ENCODE measurements at regions of chr21 and their contacts with region 1.

Region 1: DNA sequence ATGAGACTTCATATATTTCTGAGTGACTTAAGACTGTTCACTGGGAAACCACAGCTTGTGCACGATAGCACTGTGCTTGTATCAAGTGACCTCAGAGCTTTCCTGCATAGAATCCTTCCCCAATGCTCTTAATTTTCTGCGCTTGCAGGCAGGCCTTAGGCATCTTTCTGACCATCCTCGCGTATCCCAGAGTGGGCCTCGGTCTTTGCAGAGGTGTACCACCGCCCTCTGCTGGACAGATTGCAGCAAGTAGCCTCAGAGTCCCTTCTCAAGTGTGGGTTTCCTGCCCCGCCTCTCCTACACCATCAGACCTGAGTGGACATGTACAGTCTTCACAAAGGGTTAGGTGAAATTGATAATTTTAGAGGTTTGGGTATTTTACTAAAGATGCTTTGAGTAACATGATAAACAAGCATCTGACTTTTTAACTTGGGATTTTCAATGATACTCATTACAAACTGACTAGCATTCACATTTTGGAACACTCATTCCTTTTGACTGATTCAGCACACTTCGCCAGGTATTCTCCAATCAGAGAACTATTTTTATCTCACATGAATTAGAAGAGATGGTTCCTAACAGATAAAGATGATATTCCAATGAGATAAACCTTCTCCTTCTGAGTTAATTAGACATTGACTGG is 246.5 kb upstream of the USP25 start:
- H3K4me3 Mint-ChIP-seq: no peak overlapping the region
- H3K27ac Mint-ChIP-seq: no peak overlapping the region
- H3K4me1 Mint-ChIP-seq: no peaks in the 10 kb centered on the region
- H3K27me3 Mint-ChIP-seq: no peaks in the 10 kb centered on the region

Region 2: GRCh38 chr21:14403681-14404318 is 1079.5 kb before region 1 on chr21:
- intact Hi-C with region 1: loop called (anchors 10 kb)
- H3K4me3 Mint-ChIP-seq: no peak overlapping the region
- H3K27ac Mint-ChIP-seq: no peak overlapping the region
- H3K4me1 Mint-ChIP-seq: no peaks in the 10 kb centered on the region
- H3K27me3 Mint-ChIP-seq: no peaks in the 10 kb centered on the region

Region 3: DNA sequence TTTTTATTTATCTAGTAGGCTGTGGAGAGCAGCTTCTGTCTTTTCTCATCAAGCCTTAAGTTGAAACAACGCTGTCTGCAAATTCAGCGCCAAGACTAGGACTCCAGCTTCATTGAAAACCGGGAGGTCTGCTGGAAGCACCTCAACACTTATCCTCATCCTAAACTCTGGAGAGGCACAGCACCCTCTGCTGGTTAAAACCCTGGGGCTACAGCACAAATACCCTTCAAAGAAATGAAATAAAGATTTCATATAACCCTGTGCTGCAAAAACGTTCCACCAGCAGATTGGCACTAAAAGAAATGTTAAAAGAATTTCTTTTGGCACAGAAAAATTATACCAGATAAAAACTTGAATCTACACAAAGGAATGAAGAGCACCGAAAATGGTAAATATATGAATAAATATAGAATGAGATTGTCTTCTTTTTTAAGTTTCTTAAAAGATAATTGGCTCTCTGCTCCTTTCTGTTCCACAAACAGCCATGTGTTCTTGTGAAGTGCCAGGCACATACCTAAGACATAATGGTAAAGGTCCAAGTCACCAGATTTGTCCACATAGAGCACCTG is 709.4 kb before region 1 on chr21:
- intact Hi-C with region 1: loop called (anchors 10 kb)
- H3K4me3 Mint-ChIP-seq: no peak overlapping the region
- H3K27ac Mint-ChIP-seq: no peak overlapping the region
- H3K4me1 Mint-ChIP-seq: peaks cover 9% of the 10 kb centered on the region
- H3K27me3 Mint-ChIP-seq: no peaks in the 10 kb centered on the region

Region 4: GRCh38 chr21:14864211-14865021 is 618.8 kb before region 1 on chr21:
- intact Hi-C with region 1: loop called (anchors 1 kb)
- H3K4me3 Mint-ChIP-seq: no peak overlapping the region
- H3K27ac Mint-ChIP-seq: peak overlapping the region; percentile 32
- H3K4me1 Mint-ChIP-seq: peaks cover 55% of the 10 kb centered on the region
- H3K27me3 Mint-ChIP-seq: no peaks in the 10 kb centered on the region

Region 5: DNA sequence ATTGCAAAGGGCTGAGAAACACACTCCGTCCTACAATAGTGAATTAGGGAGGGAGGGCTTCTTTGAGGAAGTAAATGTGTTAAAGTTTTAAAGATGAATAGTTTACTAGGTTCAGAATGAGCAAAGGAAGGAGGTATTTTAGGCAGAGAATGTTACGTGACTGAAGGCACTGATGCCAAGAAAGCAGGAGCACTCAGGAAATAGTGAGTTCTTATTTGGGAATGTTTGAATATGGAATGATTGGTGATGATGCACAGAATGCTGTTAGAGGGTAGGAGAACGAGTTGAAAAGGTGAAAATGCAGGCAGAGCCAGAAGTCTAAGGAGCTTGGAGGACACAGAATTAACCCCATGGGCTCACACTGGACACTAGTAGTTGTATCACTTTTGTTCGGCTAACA is 526.5 kb before region 1 on chr21:
- intact Hi-C with region 1: loop called (anchors 10 kb)
- H3K4me3 Mint-ChIP-seq: no peak overlapping the region
- H3K27ac Mint-ChIP-seq: no peak overlapping the region
- H3K4me1 Mint-ChIP-seq: no peaks in the 10 kb centered on the region
- H3K27me3 Mint-ChIP-seq: no peaks in the 10 kb centered on the region

Region 6: GRCh38 chr21:15445327-15445726 is 37.9 kb before region 1 on chr21:
- intact Hi-C with region 1: loop called (anchors 5 kb)
- H3K4me3 Mint-ChIP-seq: peak overlapping the region; percentile 62
- H3K27ac Mint-ChIP-seq: peak overlapping the region; percentile 86
- H3K4me1 Mint-ChIP-seq: peaks cover 38% of the 10 kb centered on the region
- H3K27me3 Mint-ChIP-seq: no peaks in the 10 kb centered on the region

Measured in dendritic cell treated with granulocyte-macrophage colony-stimulating factor and Interleukin-4, amounts not matched to agents 40 ng/mL and 50 ng/mL, for 4 days (primary cell).